ENCODE measurements at regions of chr9 and their contacts with region 1.

Region 1: GRCh38 chr9:27033823-27034403 is 28.4 kb upstream of the LRRC19 start:
- DNase-seq: peak; percentile 18
- ATAC-seq: peak; percentile 80
- H3K4me3 ChIP-seq: no peak overlapping the region
- H3K27ac ChIP-seq: no peak overlapping the region
- H3K4me1 ChIP-seq: no peaks in the 10 kb centered on the region
- H3K27me3 ChIP-seq: no peaks in the 10 kb centered on the region
- CTCF ChIP-seq: peak; percentile 53 to 79 (median 69); a peak in 5 of 6 replicates
- POLR2A ChIP-seq: no peak
- RAD21 ChIP-seq: peak; percentile 66

Region 2: DNA sequence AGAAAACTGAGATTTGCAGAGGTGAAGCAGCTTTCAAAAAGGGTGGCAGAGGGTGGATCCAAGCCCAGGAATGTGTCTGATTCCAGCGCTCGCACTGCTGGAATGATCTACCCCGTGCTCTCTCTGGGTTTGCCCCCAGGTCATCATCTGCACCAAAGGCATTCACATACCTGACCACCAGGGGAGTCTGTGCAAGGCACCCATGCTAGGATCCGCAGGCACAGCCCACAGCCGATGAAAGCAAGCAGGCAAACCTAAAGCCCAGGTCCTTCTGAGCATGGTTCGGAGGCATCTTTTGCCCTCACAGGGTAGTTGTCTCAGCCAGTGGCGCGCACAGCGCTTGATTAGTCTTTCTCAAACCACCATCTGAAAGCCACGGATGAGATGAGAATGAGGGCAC is 131.8 kb after region 1 on chr9:
- CTCF ChIA-PET with region 1: no interaction called
- POLR2A ChIA-PET with region 1: no interaction called
- RAD21 ChIA-PET with region 1: no interaction called
- intact Hi-C with region 1: loop called (anchors 5 kb)
- DNase-seq: no peak
- ATAC-seq: peak; percentile 98
- H3K4me3 ChIP-seq: no peak overlapping the region
- H3K27ac ChIP-seq: no peak overlapping the region
- H3K4me1 ChIP-seq: no peaks in the 10 kb centered on the region; a peak in 1 of 4 replicates
- H3K27me3 ChIP-seq: no peaks in the 10 kb centered on the region
- CTCF ChIP-seq: peak in 2 of 3 experiments; percentile 52 to 55; a peak in 4 of 6 replicates
- POLR2A ChIP-seq: no peak
- RAD21 ChIP-seq: 0 out of 2 replicates have a peak, but pooled peaks have one; percentile 9

Region 3: DNA sequence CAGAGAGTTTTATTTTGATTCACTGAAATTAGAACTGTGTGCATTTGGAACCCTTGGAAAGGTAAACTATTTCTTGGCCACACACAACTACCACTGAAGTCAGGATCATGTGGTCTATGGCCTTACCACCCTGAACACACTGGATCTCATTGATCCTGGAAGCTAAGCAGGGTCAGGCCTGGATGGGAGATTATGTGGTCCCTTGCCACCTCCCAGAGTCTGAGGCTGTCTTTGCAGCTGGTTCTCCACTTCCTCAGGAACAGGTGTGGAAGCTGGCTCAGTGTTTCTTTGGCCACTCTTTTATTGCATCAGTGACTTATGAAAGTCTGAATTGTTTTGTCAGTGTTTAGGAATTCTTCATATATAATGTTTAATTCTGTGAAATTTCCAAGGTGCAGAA is 164.3 kb after region 1 on chr9:
- CTCF ChIA-PET with region 1: no interaction called
- POLR2A ChIA-PET with region 1: no interaction called
- RAD21 ChIA-PET with region 1: no interaction called
- intact Hi-C with region 1: loop called (anchors 1 kb)
- DNase-seq: peak; percentile 13
- ATAC-seq: no peak
- H3K4me3 ChIP-seq: no peak overlapping the region
- H3K27ac ChIP-seq: no peak overlapping the region
- H3K4me1 ChIP-seq: peaks cover 14 to 16% of the 10 kb centered on the region in 2 experiments
- H3K27me3 ChIP-seq: no peaks in the 10 kb centered on the region
- CTCF ChIP-seq: no peak
- POLR2A ChIP-seq: no peak
- RAD21 ChIP-seq: peak; percentile 48

Region 4: DNA sequence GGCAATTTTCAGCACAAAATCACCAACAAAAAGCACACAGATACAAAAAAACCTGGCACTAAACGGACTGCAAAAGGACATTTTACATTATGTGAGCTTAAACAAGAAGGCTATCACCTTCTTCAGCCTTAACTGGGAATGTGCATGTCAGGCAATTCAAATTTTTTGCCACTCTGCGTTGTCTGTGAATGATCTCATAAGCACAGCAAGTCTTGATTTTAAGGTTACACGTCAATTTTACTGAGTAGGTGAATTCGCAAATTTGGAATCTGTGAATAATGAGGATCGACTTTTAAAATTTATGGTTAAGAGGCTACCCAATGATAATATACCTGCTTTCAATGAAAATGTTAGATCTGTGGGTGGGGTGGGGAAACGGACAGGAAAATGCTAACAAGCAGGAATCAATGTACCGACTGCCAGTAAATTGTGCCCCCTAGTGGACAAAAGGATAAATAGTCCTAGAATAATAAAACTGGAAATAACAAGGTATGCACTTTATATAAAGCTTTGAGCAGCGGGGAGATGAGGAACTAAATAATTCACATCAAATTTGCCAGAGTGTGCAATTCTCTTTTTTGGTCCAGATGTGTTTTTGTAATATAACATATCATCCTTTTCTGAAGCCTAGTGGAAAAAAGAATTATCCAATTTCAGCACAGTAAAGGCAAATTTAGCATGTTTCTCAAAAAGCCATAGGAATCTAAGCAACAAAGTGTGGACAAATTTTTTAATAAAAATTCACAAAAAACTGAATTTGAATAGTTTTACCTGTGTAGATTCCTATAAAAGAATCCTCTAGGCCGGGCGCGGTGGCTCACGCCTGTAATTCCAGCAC is 242.5 kb after region 1 on chr9:
- CTCF ChIA-PET with region 1: interaction called, 7 read pairs
- POLR2A ChIA-PET with region 1: no interaction called
- RAD21 ChIA-PET with region 1: no interaction called
- intact Hi-C with region 1: loop called (anchors 1 kb)
- DNase-seq: peak; percentile 42
- ATAC-seq: peak; percentile 81
- H3K4me3 ChIP-seq: no peak overlapping the region
- H3K27ac ChIP-seq: no peak overlapping the region
- H3K4me1 ChIP-seq: no peaks in the 10 kb centered on the region; a peak in 1 of 4 replicates
- H3K27me3 ChIP-seq: no peaks in the 10 kb centered on the region
- CTCF ChIP-seq: peak; percentile 56 to 85 (median 62); a peak in 5 of 6 replicates
- POLR2A ChIP-seq: no peak
- RAD21 ChIP-seq: peak; percentile 81

Region 5: GRCh38 chr9:27870404-27870803 is 836.5 kb after region 1 on chr9:
- CTCF ChIA-PET with region 1: no interaction called
- POLR2A ChIA-PET with region 1: no interaction called
- RAD21 ChIA-PET with region 1: no interaction called
- intact Hi-C with region 1: no loop called
- DNase-seq: no peak
- ATAC-seq: no peak
- H3K4me3 ChIP-seq: no peak overlapping the region
- H3K27ac ChIP-seq: no peak overlapping the region
- H3K4me1 ChIP-seq: no peaks in the 10 kb centered on the region
- H3K27me3 ChIP-seq: no peaks in the 10 kb centered on the region
- CTCF ChIP-seq: no peak
- POLR2A ChIP-seq: no peak
- RAD21 ChIP-seq: no peak